ENCODE measurements at regions of chr19 and their contacts with region 1.

Region 1: DNA sequence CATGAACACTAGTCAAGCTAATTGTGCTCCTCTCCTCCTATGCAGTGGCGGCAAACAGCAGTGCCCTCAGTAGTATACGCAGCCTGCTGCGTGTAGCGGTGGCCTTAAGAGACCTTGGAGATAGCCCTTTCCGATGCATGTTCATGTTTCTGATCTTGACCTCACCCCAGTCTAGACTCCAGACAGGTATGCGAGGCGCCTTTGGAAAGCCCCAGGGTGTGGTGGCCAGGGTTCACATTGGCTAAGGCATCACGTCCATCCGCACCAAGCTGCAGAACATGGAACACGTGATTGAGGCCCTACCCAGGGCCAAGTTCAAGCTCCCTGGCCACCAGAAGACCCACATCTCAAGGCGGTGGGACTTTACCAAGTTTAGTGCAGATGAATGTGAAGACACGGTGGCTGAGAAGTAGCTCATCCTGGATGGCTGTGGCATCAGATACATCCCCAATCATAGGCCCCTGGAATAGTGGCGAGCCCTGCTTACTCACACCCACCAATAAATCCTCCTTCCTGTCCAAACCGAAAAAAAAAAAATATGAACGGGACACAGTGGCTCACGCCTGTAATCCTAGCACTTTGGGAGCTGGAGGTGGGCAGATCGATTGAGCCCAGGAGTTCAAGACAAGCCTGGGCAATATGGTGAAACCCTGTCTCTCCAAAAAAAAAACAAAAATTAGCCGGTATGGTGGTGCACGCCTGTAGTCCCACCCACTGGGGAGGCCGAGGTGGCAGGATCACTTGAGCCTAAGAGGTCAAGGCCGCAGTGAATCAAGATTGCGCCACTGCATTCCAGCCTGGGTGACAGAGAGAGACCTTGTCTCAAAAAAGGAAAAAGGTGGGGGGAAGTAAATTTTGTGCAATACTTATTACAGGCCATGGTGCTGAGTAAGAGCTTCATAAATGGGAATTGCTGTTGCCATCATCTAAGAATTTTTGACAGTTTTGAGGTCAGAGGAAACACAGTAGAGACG is 12.4 kb upstream of the CBLC start:
- DNase-seq: peak; percentile 54
- H3K4me3 ChIP-seq: no peak overlapping the region
- H3K27ac ChIP-seq: no peak overlapping the region
- H3K4me1 ChIP-seq: peaks cover 6% of the 10 kb centered on the region
- H3K27me3 ChIP-seq: no peaks in the 10 kb centered on the region

Region 2: GRCh38 chr19:44723952-44724319 is 41.3 kb before region 1 on chr19:
- in situ Hi-C with region 1: loop called (anchors 5 kb)
- DNase-seq: peak; percentile 87
- H3K4me3 ChIP-seq: no peak overlapping the region
- H3K27ac ChIP-seq: no peak overlapping the region
- H3K4me1 ChIP-seq: peaks cover 12% of the 10 kb centered on the region
- H3K27me3 ChIP-seq: no peaks in the 10 kb centered on the region